ENCODE measurements at regions of chr13 and their contacts with region 1.

Region 1: DNA sequence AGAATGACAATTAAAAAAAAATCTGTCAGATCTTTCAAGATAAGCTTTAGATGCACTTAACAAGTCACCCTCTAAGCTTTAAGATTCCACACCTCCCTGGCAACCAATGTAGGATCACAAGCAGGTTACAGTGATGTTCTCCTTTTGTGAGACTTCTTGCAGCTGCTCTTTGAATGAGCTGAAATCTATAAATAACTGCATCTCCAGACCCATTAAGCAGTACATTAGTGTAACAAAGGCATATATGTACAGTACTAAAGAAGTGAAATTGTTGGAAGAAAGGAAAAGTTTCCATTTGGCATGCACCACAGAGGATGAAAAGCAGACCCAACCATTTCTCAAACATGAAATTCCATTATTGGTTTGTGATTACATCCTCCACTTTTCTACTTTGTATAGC is 364.7 kb downstream of the ENOX1 start:
- DNase-seq: no peak
- ATAC-seq: peak; percentile 71 to 82
- H3K4me3 ChIP-seq: no peak overlapping the region
- H3K27ac ChIP-seq: no peak overlapping the region
- H3K4me1 ChIP-seq: no peaks in the 10 kb centered on the region
- H3K27me3 ChIP-seq: no peaks in the 10 kb centered on the region
- CTCF ChIP-seq: no peak
- POLR2A ChIP-seq: no peak

Region 2: DNA sequence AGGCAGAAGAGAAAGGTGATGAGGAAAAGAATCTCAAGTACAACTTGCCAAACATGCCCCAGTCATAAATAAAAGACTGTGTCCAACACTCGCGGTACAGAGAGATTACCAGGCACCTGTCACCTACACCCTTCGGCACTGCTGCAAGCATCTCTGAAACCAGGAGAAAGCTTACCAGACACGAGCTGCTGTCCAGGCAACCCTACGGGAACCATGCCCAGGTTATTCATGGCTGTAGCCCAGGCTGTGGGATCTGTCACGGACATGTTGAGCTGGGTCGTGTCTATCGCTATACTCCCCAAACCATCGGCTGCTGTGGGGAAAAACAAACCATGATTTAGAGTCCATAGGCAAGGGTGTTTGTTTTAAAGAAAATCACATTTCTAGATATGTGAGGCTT is 10.4 kb before region 1 on chr13:
- in situ Hi-C with region 1: no loop called
- intact Hi-C with region 1: loop called (anchors 1 kb)
- DNase-seq: peak; percentile 89 to 93
- ATAC-seq: peak; percentile 80 to 85
- H3K4me3 ChIP-seq: no peak overlapping the region
- H3K27ac ChIP-seq: peak overlapping the region; percentile 53 to 90 (median 65)
- H3K4me1 ChIP-seq: peaks cover 23 to 26% of the 10 kb centered on the region in 2 donors
- H3K27me3 ChIP-seq: no peaks in the 10 kb centered on the region
- CTCF ChIP-seq: no peak
- POLR2A ChIP-seq: peak in 1 of 2 donors; percentile 12

Measured in gastrocnemius medialis (tissue), 4 donors.